HepG2 (cell line): ENCODE measurements at regions of chr11 and their contacts with region 1.

Region 1: GRCh38 chr11:116829525-116830183 is at the start of gene APOC3:
- DNase-seq: peak; percentile 85
- ATAC-seq: peak; percentile 36
- H3K4me3 ChIP-seq: peak within 1 kb of the TSS; percentile 61 to 79 (median 62)
- H3K27ac ChIP-seq: peak within 1 kb of the TSS; percentile 99
- H3K4me1 ChIP-seq: peaks cover 95% of the 10 kb centered on the region
- H3K27me3 ChIP-seq: no peaks in the 10 kb centered on the region
- CTCF ChIP-seq: peak; percentile 33; the same call in 1 of the 2 replicates
- EP300 ChIP-seq: peak; percentile 41 to 46; a peak in 2 of 4 replicates
- POLR2A ChIP-seq: peak in 1 of 2 experiments; percentile 84; a peak in 2 of 4 replicates
- RAD21 ChIP-seq: peak; percentile 65
- total RNA-seq, gene APOC3: 179 and 314 TPM in 2 replicates

Region 2: GRCh38 chr11:116012055-116012454 is 817.6 kb before region 1 on chr11:
- CTCF ChIA-PET with region 1: no interaction called
- POLR2A ChIA-PET with region 1: no interaction called
- in situ Hi-C with region 1: no loop called
- intact Hi-C with region 1: no loop called
- DNase-seq: no peak
- ATAC-seq: no peak
- H3K4me3 ChIP-seq: no peak overlapping the region
- H3K27ac ChIP-seq: no peak overlapping the region
- H3K4me1 ChIP-seq: no peaks in the 10 kb centered on the region
- H3K27me3 ChIP-seq: no peaks in the 10 kb centered on the region
- CTCF ChIP-seq: no peak
- EP300 ChIP-seq: no peak
- POLR2A ChIP-seq: no peak
- RAD21 ChIP-seq: no peak

Region 3: DNA sequence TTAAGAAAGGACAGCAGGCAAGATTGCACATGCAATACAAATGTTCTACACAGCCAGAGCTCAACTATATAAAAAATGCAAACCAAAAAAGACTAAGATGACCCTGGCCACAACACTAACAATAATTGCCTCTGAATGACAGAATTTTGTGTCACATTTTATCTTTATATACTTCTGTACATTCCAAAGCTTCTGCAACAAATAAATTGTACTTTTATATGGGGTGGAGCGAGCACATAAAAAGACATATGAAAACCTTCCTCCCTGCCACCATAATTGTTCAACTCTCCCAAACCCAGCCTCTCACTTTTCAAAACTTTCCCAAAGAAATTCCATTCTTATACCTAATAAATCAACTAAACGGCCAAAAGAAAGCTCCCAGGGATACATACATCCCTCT is 67.5 kb before region 1 on chr11:
- CTCF ChIA-PET with region 1: no interaction called
- POLR2A ChIA-PET with region 1: no interaction called
- in situ Hi-C with region 1: no loop called
- intact Hi-C with region 1: no loop called
- DNase-seq: no peak
- ATAC-seq: no peak
- H3K4me3 ChIP-seq: no peak overlapping the region
- H3K27ac ChIP-seq: no peak overlapping the region
- H3K4me1 ChIP-seq: no peaks in the 10 kb centered on the region
- H3K27me3 ChIP-seq: no peaks in the 10 kb centered on the region
- CTCF ChIP-seq: no peak
- EP300 ChIP-seq: no peak
- POLR2A ChIP-seq: no peak
- RAD21 ChIP-seq: no peak

Region 4: GRCh38 chr11:116772443-116773202 is 57.0 kb before region 1 on chr11 and contains the start of gene BUD13:
- CTCF ChIA-PET with region 1: no interaction called
- POLR2A ChIA-PET with region 1: interaction called, 24 read pairs
- in situ Hi-C with region 1: no loop called
- intact Hi-C with region 1: no loop called
- DNase-seq: peak; percentile 78
- ATAC-seq: peak; percentile 95
- H3K4me3 ChIP-seq: peak within 1 kb of the TSS; percentile 89 to 98 (median 92)
- H3K27ac ChIP-seq: peak within 1 kb of the TSS; percentile 75
- H3K4me1 ChIP-seq: peaks cover 42% of the 10 kb centered on the region
- H3K27me3 ChIP-seq: no peaks in the 10 kb centered on the region
- CTCF ChIP-seq: peak; percentile 61
- EP300 ChIP-seq: no peak; a peak in 1 of 4 replicates
- POLR2A ChIP-seq: peak; percentile 76 to 92
- RAD21 ChIP-seq: peak; percentile 43
- total RNA-seq, gene BUD13: 25.9 and 31.9 TPM in 2 replicates

Region 5: DNA sequence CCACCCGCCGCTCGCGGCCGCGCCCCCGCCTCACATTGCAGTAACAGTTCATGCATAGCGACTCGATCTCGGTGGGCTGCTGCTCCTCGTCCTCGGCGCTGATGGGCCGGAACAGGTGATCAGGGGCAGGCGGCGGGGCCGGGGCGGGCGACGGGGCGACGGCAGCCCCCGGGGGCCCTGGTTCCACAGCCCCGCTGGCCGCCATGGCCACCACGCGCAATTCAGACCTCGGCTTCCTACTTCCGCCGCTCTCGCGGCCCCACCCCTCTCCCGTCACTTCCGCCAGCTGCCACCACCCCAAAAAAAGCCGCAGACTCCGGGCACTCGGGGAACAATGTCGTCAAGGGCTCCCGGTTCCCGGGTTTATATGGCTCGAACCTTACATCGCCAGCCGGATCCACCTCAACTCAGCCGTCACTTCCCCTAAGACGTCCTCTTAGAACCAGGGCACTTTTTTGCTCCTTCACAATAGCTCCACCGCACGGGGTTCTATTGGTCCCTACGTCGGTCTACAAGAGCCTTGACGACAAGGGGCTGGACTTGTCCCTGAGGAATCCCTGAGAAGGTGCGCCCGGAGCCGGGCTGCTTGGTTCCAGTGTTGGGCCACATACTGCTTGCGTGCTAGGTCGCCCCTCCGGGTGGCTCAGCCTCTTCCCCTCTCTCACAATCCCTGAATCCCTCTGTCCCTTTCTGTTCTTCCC is 41.7 kb before region 1 on chr11 and contains the start of gene ZPR1:
- CTCF ChIA-PET with region 1: interaction called, 21 read pairs
- POLR2A ChIA-PET with region 1: interaction called, 1,365 read pairs
- in situ Hi-C with region 1: no loop called
- intact Hi-C with region 1: no loop called
- DNase-seq: peak; percentile 37
- ATAC-seq: peak; percentile 55
- H3K4me3 ChIP-seq: peak within 1 kb of the TSS; percentile 79 to 90 (median 86)
- H3K27ac ChIP-seq: peak within 1 kb of the TSS; percentile 61
- H3K4me1 ChIP-seq: peaks cover 58% of the 10 kb centered on the region
- H3K27me3 ChIP-seq: no peaks in the 10 kb centered on the region; a peak in 1 of 5 replicates
- CTCF ChIP-seq: no peak
- EP300 ChIP-seq: no peak
- POLR2A ChIP-seq: peak; percentile 58 to 71; a peak in 3 of 4 replicates
- RAD21 ChIP-seq: no peak
- total RNA-seq, gene ZPR1: 79.3 and 102 TPM in 2 replicates

Region 6: GRCh38 chr11:116808386-116809194 is 21.1 kb before region 1 on chr11:
- CTCF ChIA-PET with region 1: no interaction called
- POLR2A ChIA-PET with region 1: interaction called, 778 read pairs
- in situ Hi-C with region 1: no loop called
- intact Hi-C with region 1: loop called (anchors 1 kb)
- DNase-seq: peak; percentile 98
- ATAC-seq: peak; percentile 90
- H3K4me3 ChIP-seq: peak overlapping the region; percentile 20 to 62 (median 31); a peak in 5 of 6 replicates
- H3K27ac ChIP-seq: peak overlapping the region; percentile 98
- H3K4me1 ChIP-seq: peaks cover 87% of the 10 kb centered on the region
- H3K27me3 ChIP-seq: no peaks in the 10 kb centered on the region
- CTCF ChIP-seq: no peak
- EP300 ChIP-seq: peak; percentile 97 to 99
- POLR2A ChIP-seq: peak; percentile 68 to 82; a peak in 2 of 4 replicates
- RAD21 ChIP-seq: no peak

Region 7: DNA sequence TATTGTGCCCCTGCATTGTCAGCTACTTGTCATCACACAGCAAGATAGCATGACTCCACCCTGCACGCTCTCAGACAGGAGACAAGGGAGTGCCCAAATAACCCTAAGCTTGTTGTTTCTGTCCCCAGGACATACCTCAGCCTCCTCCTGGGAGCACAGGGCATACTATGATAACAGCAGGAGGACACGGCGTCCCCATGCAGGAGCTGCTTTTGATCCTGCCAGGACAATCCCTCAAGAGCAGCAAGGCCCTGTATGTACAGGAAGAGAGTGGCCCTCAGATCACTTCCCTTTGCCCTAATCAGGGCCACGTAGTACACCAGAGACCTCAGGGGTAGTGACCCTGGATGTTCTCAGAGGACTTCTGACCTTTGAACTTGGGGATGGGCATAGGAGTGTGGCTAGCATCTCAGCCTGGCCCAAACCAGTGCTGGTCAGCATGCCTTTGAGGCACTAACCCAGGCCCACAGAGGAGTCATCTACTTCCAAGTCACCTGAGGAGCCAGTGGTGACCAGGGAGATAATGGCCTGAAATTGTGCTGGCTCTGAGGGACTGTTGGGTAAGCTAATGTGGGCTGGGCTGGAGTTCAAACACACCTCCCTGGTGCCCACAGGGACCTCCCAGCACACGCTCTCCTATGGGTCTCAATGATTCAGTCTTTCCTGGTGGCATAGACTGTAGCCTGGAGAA is 15.7 kb before region 1 on chr11:
- CTCF ChIA-PET with region 1: no interaction called
- POLR2A ChIA-PET with region 1: interaction called, 778 read pairs
- in situ Hi-C with region 1: no loop called
- intact Hi-C with region 1: no loop called
- DNase-seq: peak; percentile 50
- ATAC-seq: peak; percentile 77
- H3K4me3 ChIP-seq: no peak overlapping the region; a peak in 1 of 6 replicates
- H3K27ac ChIP-seq: peak overlapping the region; percentile 70
- H3K4me1 ChIP-seq: peaks cover 83% of the 10 kb centered on the region
- H3K27me3 ChIP-seq: no peaks in the 10 kb centered on the region
- CTCF ChIP-seq: no peak
- EP300 ChIP-seq: peak in 1 of 2 experiments; percentile 25; a peak in 2 of 4 replicates
- POLR2A ChIP-seq: peak in 1 of 2 experiments; percentile 24; a peak in 1 of 4 replicates
- RAD21 ChIP-seq: no peak